Endothelial cell of umbilical vein (primary cell): ENCODE measurements at regions of chr22 and their contacts with region 1.

Region 1: GRCh38 chr22:30634471-30635233 is 929 bp upstream of the SLC35E4 start:
- DNase-seq: peak; percentile 91
- H3K4me3 ChIP-seq: peak overlapping the region; percentile 20 to 52 (median 51)
- H3K27ac ChIP-seq: peak overlapping the region; percentile 93
- H3K4me1 ChIP-seq: peaks cover 31% of the 10 kb centered on the region
- H3K27me3 ChIP-seq: no peaks in the 10 kb centered on the region
- CTCF ChIP-seq: peak; percentile 95 to 98
- POLR2A ChIP-seq: no peak

Region 2: DNA sequence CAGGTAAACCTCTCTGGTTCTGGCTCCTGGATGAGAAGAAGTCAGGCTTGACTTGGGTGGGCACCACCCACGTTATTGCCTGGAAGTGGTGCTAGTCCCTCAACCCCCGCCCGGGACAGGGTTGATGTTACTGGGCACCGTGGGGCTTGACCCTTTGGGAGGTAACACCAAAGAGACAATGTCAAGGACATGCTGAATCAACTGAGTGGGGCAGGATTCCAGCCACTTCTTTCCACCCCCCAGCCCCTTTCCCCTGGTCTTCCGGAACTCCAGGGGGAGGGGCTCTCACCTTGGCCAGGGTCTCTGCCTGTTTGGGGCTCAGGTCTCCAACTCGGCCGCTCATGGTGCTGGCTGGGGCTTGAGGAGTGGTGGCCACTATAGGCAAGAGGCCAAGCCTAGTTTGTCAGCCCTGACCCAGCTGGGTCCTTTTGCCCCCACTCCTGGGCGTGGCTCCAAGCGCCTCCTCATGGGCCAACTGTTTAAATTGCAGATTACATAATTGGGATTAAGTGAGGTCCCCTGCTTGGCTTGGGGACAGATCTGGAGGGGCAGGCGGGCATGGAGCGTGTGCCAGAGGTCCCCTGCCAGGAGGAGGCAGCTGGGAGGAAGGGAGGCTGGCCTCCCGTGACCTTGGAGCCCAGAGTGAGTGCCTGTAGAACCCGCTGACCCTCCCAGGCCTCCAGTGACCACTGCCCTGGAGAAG is 162.9 kb before region 1 on chr22 and contains the start of gene SEC14L3:
- CTCF ChIA-PET with region 1: no interaction called
- POLR2A ChIA-PET with region 1: no interaction called
- dilution Hi-C with region 1: no loop called
- intact Hi-C with region 1: no loop called
- DNase-seq: no peak
- H3K4me3 ChIP-seq: no peak within 1 kb of the TSS
- H3K27ac ChIP-seq: no peak within 1 kb of the TSS
- H3K4me1 ChIP-seq: no peaks in the 10 kb centered on the region
- H3K27me3 ChIP-seq: peaks cover 9 to 11% of the 10 kb centered on the region in 2 experiments
- CTCF ChIP-seq: no peak
- POLR2A ChIP-seq: no peak
- total RNA-seq, gene SEC14L3: not detected in 2 replicates

Region 3: DNA sequence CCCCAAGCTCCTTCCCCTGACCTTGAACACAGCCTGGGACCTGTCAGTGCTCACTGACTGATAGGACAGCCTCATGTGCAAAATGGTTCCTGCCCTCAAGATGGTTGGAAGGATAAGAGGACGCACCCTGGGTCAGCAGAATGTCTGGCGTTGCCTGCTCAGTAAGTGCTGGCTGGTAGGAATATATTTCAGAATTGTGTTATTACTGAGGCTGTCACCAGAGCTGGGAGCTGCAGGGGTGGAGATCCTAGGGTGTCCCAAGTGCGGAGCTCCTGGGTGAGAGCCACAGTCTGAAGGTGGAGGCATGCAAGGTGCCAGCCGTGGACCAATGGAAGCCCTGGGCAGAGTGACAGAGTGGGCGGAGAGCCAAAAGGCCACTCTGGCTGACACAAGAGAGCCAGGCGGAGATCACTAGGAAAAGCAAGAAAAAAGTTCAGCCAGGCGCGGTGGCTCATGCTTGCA is 128.1 kb before region 1 on chr22:
- CTCF ChIA-PET with region 1: no interaction called
- POLR2A ChIA-PET with region 1: no interaction called
- dilution Hi-C with region 1: no loop called
- intact Hi-C with region 1: no loop called
- DNase-seq: no peak
- H3K4me3 ChIP-seq: no peak overlapping the region
- H3K27ac ChIP-seq: no peak overlapping the region
- H3K4me1 ChIP-seq: no peaks in the 10 kb centered on the region
- H3K27me3 ChIP-seq: peaks cover 13% of the 10 kb centered on the region in 2 experiments
- CTCF ChIP-seq: no peak
- POLR2A ChIP-seq: no peak

Region 4: DNA sequence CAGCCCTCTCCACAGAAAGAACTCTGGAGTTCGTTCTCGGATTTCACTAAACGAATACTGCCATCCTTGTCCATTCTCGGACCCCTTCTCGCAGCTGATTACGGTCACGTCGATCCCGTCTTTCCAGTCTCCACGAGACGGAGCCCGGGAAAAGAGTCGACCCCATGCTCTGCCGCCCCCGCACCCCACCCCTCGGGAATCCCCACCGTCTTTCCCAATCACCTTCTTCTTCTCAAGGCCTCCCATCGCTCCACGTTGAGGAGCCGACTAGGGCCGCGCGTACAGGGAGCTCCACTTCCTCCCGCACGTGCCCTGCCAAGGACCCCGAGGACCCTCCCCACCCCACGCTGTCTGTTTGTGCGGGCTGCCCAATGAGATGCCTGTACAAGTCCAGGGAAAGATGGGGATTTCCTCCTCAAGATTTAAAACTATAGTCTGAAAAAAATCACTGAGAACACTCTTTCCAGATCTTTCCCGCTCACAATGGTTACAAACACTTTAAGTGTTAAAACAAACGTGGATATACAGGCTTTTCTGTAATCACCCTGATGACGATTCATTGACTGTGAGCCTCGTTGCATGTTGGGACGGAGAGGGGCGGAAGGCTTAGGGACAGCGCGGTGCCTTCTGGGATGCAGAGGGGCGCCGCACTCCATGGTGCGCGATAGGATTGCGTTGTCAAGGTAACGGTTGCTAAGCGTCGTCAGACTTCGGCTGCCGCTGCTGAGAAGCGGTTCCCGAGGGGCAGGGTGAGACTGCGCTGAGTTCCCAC is 42.9 kb before region 1 on chr22 and contains the start of gene PES1:
- CTCF ChIA-PET with region 1: interaction called, 9 read pairs
- POLR2A ChIA-PET with region 1: no interaction called
- dilution Hi-C with region 1: no loop called
- intact Hi-C with region 1: loop called (anchors 1 kb)
- DNase-seq: peak; percentile 99
- H3K4me3 ChIP-seq: peak within 1 kb of the TSS; percentile 68 to 93 (median 72)
- H3K27ac ChIP-seq: peak within 1 kb of the TSS; percentile 95
- H3K4me1 ChIP-seq: peaks cover 10% of the 10 kb centered on the region
- H3K27me3 ChIP-seq: no peaks in the 10 kb centered on the region
- CTCF ChIP-seq: no peak
- POLR2A ChIP-seq: no peak
- total RNA-seq, gene PES1: 106 and 110 TPM in 2 replicates

Region 5: DNA sequence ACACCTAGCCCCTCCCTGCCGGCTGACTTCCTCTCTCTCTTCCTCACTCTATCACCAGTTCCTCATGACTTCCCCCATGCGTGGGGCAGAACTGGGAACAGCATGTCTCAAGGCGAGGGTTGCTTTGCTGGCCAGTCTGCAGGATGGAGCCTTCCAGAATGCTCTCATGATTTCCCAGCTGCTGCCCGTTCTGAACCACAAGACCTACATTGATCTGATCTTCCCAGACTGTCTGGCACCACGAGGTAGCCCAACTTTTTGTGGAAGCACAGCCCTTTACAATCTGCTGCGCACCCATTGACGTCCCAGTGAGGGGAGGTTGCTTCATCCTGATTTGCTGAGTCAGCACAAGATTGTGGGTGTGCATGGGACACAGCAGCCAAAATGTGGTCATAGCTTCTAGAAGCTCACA is 19.1 kb before region 1 on chr22:
- CTCF ChIA-PET with region 1: interaction called, 51 read pairs
- POLR2A ChIA-PET with region 1: no interaction called
- dilution Hi-C with region 1: no loop called
- intact Hi-C with region 1: no loop called
- DNase-seq: no peak
- H3K4me3 ChIP-seq: no peak overlapping the region
- H3K27ac ChIP-seq: no peak overlapping the region
- H3K4me1 ChIP-seq: no peaks in the 10 kb centered on the region
- H3K27me3 ChIP-seq: no peaks in the 10 kb centered on the region
- CTCF ChIP-seq: no peak
- POLR2A ChIP-seq: no peak

Region 6: DNA sequence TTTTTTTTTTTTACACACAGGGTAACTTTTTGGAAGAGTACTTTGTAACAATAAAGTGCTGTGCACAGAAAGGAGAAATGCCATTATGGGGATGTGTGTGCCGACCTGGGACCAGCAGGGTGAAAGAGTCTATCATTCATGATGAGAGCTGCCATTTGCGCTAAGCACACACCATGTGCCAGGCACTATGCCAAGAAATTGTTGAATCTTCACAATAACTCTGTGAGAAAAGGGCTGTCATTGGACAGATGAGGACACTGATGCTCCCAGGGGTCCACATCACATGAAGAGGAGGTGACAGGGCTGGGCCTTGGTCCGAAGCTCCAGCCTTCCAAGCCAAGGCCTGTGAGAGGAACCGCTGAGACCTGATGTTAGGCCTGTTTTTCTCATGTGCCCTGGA is 27.4 kb after region 1 on chr22:
- CTCF ChIA-PET with region 1: interaction called, 27 read pairs
- POLR2A ChIA-PET with region 1: no interaction called
- dilution Hi-C with region 1: no loop called
- intact Hi-C with region 1: loop called (anchors 1 kb)
- DNase-seq: no peak
- H3K4me3 ChIP-seq: no peak overlapping the region
- H3K27ac ChIP-seq: no peak overlapping the region
- H3K4me1 ChIP-seq: peaks cover 6% of the 10 kb centered on the region
- H3K27me3 ChIP-seq: no peaks in the 10 kb centered on the region
- CTCF ChIP-seq: no peak
- POLR2A ChIP-seq: no peak

Region 7: GRCh38 chr22:30694171-30694639 is 59.6 kb after region 1 on chr22:
- CTCF ChIA-PET with region 1: interaction called, 9 read pairs
- POLR2A ChIA-PET with region 1: no interaction called
- dilution Hi-C with region 1: no loop called
- intact Hi-C with region 1: loop called (anchors 1 kb)
- DNase-seq: peak; percentile 57
- H3K4me3 ChIP-seq: peak overlapping the region; percentile 25 to 66 (median 51)
- H3K27ac ChIP-seq: peak overlapping the region; percentile 5
- H3K4me1 ChIP-seq: peaks cover 9% of the 10 kb centered on the region
- H3K27me3 ChIP-seq: no peaks in the 10 kb centered on the region
- CTCF ChIP-seq: peak in 1 of 2 donors; percentile 5
- POLR2A ChIP-seq: no peak

Region 8: GRCh38 chr22:30742291-30743256 is 107.9 kb after region 1 on chr22:
- CTCF ChIA-PET with region 1: interaction called, 18 read pairs
- POLR2A ChIA-PET with region 1: no interaction called
- dilution Hi-C with region 1: no loop called
- intact Hi-C with region 1: no loop called
- DNase-seq: no peak
- H3K4me3 ChIP-seq: no peak overlapping the region
- H3K27ac ChIP-seq: no peak overlapping the region
- H3K4me1 ChIP-seq: peaks cover 17% of the 10 kb centered on the region
- H3K27me3 ChIP-seq: no peaks in the 10 kb centered on the region
- CTCF ChIP-seq: no peak
- POLR2A ChIP-seq: no peak

Region 9: GRCh38 chr22:30830907-30831306 is 196.3 kb after region 1 on chr22:
- CTCF ChIA-PET with region 1: no interaction called
- POLR2A ChIA-PET with region 1: no interaction called
- dilution Hi-C with region 1: no loop called
- intact Hi-C with region 1: no loop called
- DNase-seq: peak; percentile 92
- H3K4me3 ChIP-seq: no peak overlapping the region
- H3K27ac ChIP-seq: peak overlapping the region; percentile 69
- H3K4me1 ChIP-seq: peaks cover 18% of the 10 kb centered on the region
- H3K27me3 ChIP-seq: no peaks in the 10 kb centered on the region
- CTCF ChIP-seq: no peak
- POLR2A ChIP-seq: no peak

Region 10: DNA sequence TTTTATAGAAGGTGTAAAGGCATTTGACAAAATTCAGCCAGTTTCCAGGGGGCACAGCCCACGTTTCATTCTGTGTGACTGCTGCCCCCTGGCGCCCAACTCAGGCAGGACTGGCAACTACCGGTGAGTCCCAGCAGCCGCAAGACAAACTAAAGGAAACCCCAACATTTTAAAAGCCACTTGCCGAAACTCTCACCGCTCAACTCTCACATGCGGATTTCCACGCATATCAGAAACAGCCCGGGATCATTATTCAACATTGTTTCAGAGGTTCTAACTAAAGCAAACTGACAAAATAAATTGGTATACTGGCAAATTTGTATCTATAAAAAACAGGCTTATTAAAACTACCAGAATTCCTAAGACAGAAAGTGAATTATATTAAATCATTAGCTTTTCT is 285.8 kb after region 1 on chr22:
- CTCF ChIA-PET with region 1: interaction called, 11 read pairs
- POLR2A ChIA-PET with region 1: no interaction called
- dilution Hi-C with region 1: no loop called
- intact Hi-C with region 1: loop called (anchors 1 kb)
- DNase-seq: peak; percentile 62
- H3K4me3 ChIP-seq: no peak overlapping the region
- H3K27ac ChIP-seq: no peak overlapping the region
- H3K4me1 ChIP-seq: peaks cover 13% of the 10 kb centered on the region
- H3K27me3 ChIP-seq: no peaks in the 10 kb centered on the region
- CTCF ChIP-seq: peak; percentile 87 to 88
- POLR2A ChIP-seq: no peak